ENCODE measurements at regions of chr2 and their contacts with region 1.

Region 1: GRCh38 chr2:12716282-12717190 is at the start of gene TRIB2:
- DNase-seq: peak in 2 of 3 donors; percentile 14 to 51
- H3K4me3 ChIP-seq: peak within 1 kb of the TSS; percentile 53 to 81 (median 57)
- H3K4me3 Mint-ChIP-seq: peak within 1 kb of the TSS; percentile 97 to 98
- H3K27ac ChIP-seq: no peak within 1 kb of the TSS
- H3K27ac Mint-ChIP-seq: peak within 1 kb of the TSS in 6 of 7 donors; percentile 15 to 83 (median 64)
- H3K4me1 ChIP-seq: peaks cover 34 to 45% of the 10 kb centered on the region in 2 donors
- H3K4me1 Mint-ChIP-seq: peaks cover 46% of the 10 kb centered on the region
- H3K27me3 ChIP-seq: peaks cover 43 to 70% of the 10 kb centered on the region in 2 donors
- H3K27me3 Mint-ChIP-seq: peaks cover 47 to 75% (median 59%) of the 10 kb centered on the region in 3 donors
- CTCF ChIP-seq: peak; percentile 42
- polyA plus RNA-seq, gene TRIB2: 0.29 to 2.6 (median 0.51) TPM

Region 2: GRCh38 chr2:12442476-12442847 is 274.1 kb before region 1 on chr2:
- intact Hi-C with region 1: loop called in 1 of 2 experiments (anchors 10 kb)
- DNase-seq: peak in 2 of 3 donors; percentile 21 to 34
- H3K4me3 ChIP-seq: no peak overlapping the region
- H3K4me3 Mint-ChIP-seq: no peak overlapping the region
- H3K27ac ChIP-seq: no peak overlapping the region
- H3K27ac Mint-ChIP-seq: no peak overlapping the region
- H3K4me1 ChIP-seq: peaks cover 7 to 12% of the 10 kb centered on the region in 2 donors
- H3K4me1 Mint-ChIP-seq: peaks cover 14% of the 10 kb centered on the region
- H3K27me3 ChIP-seq: no peaks in the 10 kb centered on the region
- H3K27me3 Mint-ChIP-seq: peaks cover 0 to 2% (median 2%) of the 10 kb centered on the region in 3 donors
- CTCF ChIP-seq: no peak